Heart right ventricle (tissue), 16 donors: ENCODE measurements at regions of chr18 and their contacts with region 1.

Region 1: GRCh38 chr18:59085797-59086196 is 53.9 kb upstream of the SEC11C start:
- DNase-seq: no peak
- ATAC-seq: no peak
- H3K4me3 ChIP-seq: no peak overlapping the region
- H3K27ac ChIP-seq: no peak overlapping the region
- H3K4me1 ChIP-seq: no peaks in the 10 kb centered on the region
- H3K27me3 ChIP-seq: peaks cover 0 to 32% (median 10%) of the 10 kb centered on the region in 7 donors
- CTCF ChIP-seq: no peak

Region 2: GRCh38 chr18:58223717-58224424 is 861.9 kb before region 1 on chr18:
- intact Hi-C with region 1: no loop called
- DNase-seq: peak in 1 of 2 donors; percentile 71
- ATAC-seq: peak; percentile 85 to 97 (median 91)
- H3K4me3 ChIP-seq: peak overlapping the region in 2 of 10 donors; percentile 16 to 18
- H3K27ac ChIP-seq: peak overlapping the region; percentile 50 to 89 (median 79)
- H3K4me1 ChIP-seq: peaks cover 5 to 36% (median 19%) of the 10 kb centered on the region in 9 donors
- H3K27me3 ChIP-seq: peaks cover 0 to 3% (median 0%) of the 10 kb centered on the region in 7 donors
- CTCF ChIP-seq: no peak

Region 3: DNA sequence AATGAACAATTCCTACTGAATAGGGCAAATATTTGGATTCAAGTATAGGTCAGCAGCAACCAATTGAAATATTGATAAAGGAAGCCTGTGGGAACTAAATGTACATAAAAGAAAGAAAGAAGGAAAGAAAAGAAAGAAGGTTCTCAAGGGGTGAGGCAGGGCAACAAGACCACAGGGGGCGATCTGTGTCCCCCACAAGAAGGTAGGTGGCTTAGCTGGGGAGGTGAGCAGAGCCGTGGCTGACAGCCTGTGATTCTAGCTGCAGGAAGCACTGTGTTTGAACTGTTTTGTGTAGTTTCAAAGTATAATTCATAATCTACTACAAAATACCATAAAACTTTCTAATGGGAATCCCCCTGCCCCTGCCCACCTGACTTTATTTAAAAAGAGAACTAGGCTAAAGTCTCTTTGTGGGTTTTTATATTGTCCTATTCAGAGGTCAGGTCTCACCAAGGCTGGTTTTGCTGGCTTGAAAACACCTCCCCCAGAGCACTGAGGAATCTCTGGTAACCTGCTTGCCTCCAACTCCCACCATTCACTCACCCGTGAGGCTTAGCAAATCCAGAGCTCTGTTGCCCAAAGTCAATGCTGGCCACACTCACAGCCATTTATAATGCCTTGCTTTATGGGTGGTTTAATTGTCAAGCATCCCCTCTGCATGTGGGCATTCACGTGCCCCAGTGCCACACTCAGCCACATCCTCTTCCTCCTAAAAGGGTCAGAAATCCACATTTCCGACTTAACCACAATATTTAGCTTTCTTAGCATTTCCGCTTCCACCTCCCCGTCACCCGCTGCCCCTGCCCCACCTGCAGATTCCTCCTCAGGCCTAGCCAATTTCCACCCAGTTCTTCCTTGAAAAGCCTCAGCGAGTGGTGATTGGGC is 309.7 kb after region 1 on chr18:
- intact Hi-C with region 1: loop called in 4 of 10 experiments (anchors 5 to 10 kb)
- DNase-seq: no peak
- ATAC-seq: no peak
- H3K4me3 ChIP-seq: no peak overlapping the region
- H3K27ac ChIP-seq: no peak overlapping the region
- H3K4me1 ChIP-seq: no peaks in the 10 kb centered on the region
- H3K27me3 ChIP-seq: peaks cover 0 to 23% (median 12%) of the 10 kb centered on the region in 7 donors
- CTCF ChIP-seq: no peak

Region 4: GRCh38 chr18:60259052-60259681 is 1173.4 kb after region 1 on chr18:
- intact Hi-C with region 1: no loop called
- DNase-seq: no peak
- ATAC-seq: no peak
- H3K4me3 ChIP-seq: no peak overlapping the region
- H3K27ac ChIP-seq: no peak overlapping the region
- H3K4me1 ChIP-seq: no peaks in the 10 kb centered on the region
- H3K27me3 ChIP-seq: no peaks in the 10 kb centered on the region
- CTCF ChIP-seq: no peak